ENCODE measurements at regions of chr3 and their contacts with region 1.

Region 1: DNA sequence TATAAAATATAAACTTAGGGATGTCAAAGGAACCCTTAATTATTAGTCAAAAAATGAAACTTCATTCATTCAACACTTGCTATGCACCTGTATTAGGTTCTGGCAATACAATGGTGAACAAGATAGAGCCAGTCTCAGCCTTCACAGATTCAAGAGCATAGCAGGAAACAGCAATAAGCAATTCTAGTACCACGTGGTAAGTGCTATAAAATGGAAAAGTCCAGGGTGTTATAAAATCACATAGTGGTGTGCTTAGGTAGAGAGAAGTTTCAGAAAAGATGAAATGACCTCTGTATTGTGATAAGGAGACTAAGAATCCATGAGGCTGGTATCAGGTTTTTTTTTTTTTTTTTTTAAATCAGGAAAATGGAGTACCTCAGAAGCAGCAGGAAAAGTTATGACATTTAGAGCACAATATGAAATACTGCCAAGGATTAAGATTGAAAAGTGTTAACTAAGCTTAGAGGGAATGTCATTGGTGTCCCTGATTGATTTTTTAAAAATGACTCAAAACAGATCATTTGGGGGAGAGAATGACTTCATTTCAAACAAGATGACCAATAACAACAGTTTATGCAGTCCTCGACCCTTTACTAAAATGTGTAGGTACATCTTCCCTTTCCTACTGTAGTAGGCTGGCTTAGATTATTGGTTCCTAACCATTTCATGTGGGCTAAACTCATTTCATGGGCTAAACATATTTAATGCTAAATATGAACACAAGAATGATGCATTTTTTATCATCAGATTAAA is 5.0 kb downstream of the TOMM70 start:
- DNase-seq: no peak
- H3K4me3 ChIP-seq: no peak overlapping the region
- H3K27ac ChIP-seq: no peak overlapping the region
- H3K4me1 ChIP-seq: peaks cover 11% of the 10 kb centered on the region
- H3K27me3 ChIP-seq: no peaks in the 10 kb centered on the region
- CTCF ChIP-seq: no peak
- POLR2A ChIP-seq: no peak

Region 2: GRCh38 chr3:100352296-100353231 is 43.3 kb before region 1 on chr3:
- CTCF ChIA-PET with region 1: no interaction called
- POLR2A ChIA-PET with region 1: no interaction called
- dilution Hi-C with region 1: no loop called
- intact Hi-C with region 1: loop called (anchors 1 kb)
- DNase-seq: peak; percentile 52
- H3K4me3 ChIP-seq: no peak overlapping the region
- H3K27ac ChIP-seq: no peak overlapping the region
- H3K4me1 ChIP-seq: no peaks in the 10 kb centered on the region
- H3K27me3 ChIP-seq: no peaks in the 10 kb centered on the region
- CTCF ChIP-seq: no peak
- POLR2A ChIP-seq: no peak